ENCODE measurements at regions of chr15 and their contacts with region 1.

Region 1: DNA sequence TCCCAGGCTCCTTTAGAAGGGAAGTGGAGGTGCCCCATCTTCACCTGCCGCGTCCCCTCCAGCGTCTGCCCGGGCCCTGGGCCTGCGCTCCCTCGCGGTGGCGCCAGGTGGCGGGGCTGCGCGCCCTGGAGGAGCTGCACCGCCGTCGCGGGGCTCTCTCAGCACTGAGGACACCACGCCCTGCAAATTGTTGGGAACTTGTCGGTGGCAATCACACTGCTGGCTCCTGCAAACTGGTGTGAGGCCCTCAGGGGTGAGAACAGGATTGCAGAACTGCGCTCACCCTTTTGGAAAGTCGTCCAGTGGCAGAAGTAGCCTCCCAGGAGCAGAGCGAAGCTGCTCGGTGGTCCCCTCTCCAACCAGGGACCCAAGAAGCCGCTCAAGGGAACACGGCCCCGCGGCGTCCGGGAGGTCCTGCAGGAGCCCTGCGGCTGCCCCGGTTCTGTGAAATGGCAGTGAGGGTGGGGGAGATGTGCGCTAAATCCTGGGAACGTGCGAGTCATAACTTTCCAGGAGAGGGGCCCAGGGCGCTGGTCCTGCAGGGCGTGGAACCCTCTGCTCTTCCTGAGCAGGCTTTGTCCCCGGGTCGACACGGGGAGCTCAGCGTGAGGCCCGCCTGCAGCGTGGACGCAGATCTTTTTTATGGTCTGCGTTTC is 995 bp upstream of the LRRK1 start:
- DNase-seq: peak; percentile 82 to 89
- ATAC-seq: peak; percentile 85 to 95 (median 94)
- H3K4me3 ChIP-seq: peak overlapping the region; percentile 83
- H3K27ac ChIP-seq: peak overlapping the region; percentile 67
- H3K4me1 ChIP-seq: peaks cover 14% of the 10 kb centered on the region
- H3K27me3 ChIP-seq: peaks cover 0 to 14% (median 1%) of the 10 kb centered on the region in 3 donors
- CTCF ChIP-seq: peak; percentile 89

Region 2: DNA sequence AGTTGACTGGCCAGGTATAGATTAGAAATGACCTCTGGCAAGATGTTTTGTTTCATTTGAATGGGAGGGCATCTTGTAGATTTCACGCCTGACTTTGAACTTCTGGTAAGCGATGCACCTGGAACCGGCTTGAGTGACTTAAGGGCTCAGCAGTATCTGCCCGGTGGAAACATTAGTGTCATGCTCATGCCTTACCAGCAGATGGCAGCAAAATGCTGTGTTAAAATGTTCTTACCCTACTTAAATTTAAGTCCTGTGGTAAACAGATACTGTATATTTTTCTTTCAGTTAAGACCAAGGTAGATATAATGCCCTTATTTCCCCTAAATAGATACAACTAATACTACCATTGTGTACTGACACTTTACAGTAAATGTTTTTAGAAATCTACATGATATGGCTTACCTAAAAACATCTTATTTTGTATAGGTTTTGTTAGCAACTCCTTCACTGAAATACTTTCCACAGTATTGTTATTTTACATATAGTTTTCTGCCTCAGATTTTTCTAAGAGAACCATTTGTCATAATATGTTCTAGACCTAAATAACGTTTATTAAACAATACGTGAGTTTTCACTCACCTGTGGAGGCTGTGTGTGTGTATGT is 290.3 kb before region 1 on chr15:
- intact Hi-C with region 1: loop called in 1 of 2 experiments (anchors 5 kb)
- DNase-seq: peak in 1 of 2 donors; percentile 20
- ATAC-seq: peak; percentile 83 to 91 (median 88)
- H3K4me3 ChIP-seq: no peak overlapping the region
- H3K27ac ChIP-seq: no peak overlapping the region
- H3K4me1 ChIP-seq: peaks cover 11% of the 10 kb centered on the region
- H3K27me3 ChIP-seq: no peaks in the 10 kb centered on the region
- CTCF ChIP-seq: peak; percentile 92